HEK293 (cell line): ENCODE measurements at regions of chr7 and their contacts with region 1.

Region 1: DNA sequence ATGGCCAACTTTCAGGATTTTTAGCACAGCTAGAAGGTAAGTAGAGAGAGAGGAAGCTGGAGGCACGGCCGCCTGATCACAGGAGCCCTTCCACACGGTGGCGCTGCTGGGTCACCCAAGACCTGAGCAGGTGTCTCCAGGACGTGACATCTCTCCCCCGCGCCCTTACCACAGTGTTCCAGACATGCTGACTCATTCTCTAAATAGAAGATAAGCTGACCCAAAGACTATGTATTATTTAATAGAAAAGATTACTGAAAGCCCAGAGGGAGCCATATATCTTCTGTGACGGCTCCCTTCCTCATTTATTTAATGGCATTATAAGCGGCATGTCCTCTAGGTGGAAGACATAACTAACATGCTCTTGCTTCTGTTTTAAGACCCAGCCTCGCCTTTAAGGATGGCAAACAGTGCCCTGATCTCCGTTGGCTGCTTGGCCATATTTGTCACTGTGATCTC is 26.0 kb upstream of the MALSU1 start:
- H3K4me3 ChIP-seq: no peak overlapping the region; the same call in 1 of the 2 replicates
- H3K27ac ChIP-seq: peak overlapping the region; percentile 58
- H3K4me1 ChIP-seq: peaks cover 12% of the 10 kb centered on the region; the same call in 1 of the 2 replicates
- CTCF ChIP-seq: peak; percentile 76

Region 2: DNA sequence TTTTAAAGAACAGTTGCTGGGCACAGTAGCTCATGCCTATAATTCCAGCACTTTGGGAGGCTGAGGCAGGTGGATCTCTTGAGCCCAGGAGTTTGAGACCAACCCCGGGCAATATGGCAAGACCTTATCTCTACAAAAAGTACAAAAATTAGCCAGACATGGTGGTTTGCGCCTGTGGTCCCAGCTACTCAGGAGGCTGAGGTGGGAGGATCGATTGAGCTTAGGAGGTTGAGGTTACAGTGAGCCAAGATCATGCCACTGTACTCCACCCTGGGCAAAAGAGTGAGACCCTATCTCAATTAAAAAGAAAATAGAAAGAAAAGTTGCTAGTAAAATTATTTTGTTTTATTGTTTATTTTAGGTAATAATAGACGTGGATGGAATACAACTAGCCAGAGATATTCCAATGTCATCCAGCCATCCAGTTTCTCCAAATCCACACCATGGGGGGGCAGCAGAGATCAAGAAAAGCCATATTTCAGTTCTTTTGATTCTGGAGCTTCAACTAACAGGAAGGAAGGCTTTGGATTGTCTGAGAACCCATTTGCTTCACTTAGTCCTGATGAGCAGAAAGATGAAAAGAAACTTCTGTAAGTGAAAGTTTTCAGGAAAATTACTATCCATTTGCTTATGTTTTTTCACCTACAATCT is 88.3 kb before region 1 on chr7:
- CTCF ChIA-PET with region 1: interaction called, 15 read pairs
- POLR2A ChIA-PET with region 1: interaction called, 3 read pairs
- H3K4me3 ChIP-seq: no peak overlapping the region
- H3K27ac ChIP-seq: no peak overlapping the region
- H3K4me1 ChIP-seq: peaks cover 5% of the 10 kb centered on the region
- CTCF ChIP-seq: 0 out of 2 replicates have a peak, but pooled peaks have one; percentile 24

Region 3: DNA sequence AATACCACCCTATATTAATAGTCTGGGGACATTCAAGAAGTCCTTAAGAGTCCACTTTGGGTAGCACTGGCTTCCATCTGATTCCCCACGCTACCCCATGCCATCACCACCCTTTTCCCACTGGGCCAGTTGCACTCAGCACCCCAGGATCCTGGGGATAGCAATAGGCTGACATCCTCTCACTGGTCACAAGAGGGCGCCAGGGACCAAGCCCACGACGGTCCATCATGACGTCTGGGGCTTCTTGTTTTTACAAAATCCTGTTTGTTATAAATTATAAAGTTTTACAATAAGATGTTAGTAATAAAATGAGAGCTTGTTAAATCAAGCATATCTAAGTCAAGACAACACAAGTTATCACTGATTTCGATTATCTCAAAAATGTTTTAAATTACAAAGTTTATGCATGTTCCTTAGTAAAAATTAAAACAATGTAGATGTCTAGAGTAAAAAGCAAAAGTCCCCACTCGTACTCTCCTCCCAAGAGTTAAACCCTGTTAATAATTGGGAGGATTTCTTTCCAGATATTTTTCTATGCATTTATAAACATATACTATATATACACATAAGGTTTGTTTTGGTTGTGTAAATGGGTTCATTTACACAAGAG is 11.2 kb before region 1 on chr7:
- CTCF ChIA-PET with region 1: interaction called, 92 read pairs
- POLR2A ChIA-PET with region 1: no interaction called
- H3K4me3 ChIP-seq: no peak overlapping the region
- H3K27ac ChIP-seq: no peak overlapping the region
- H3K4me1 ChIP-seq: no peaks in the 10 kb centered on the region
- CTCF ChIP-seq: 0 out of 2 replicates have a peak, but pooled peaks have one; percentile 29

Region 4: GRCh38 chr7:23284871-23285270 is 11.7 kb after region 1 on chr7:
- CTCF ChIA-PET with region 1: interaction called, 12 read pairs
- POLR2A ChIA-PET with region 1: no interaction called
- H3K4me3 ChIP-seq: no peak overlapping the region
- H3K27ac ChIP-seq: no peak overlapping the region
- H3K4me1 ChIP-seq: no peaks in the 10 kb centered on the region
- CTCF ChIP-seq: no peak

Region 5: DNA sequence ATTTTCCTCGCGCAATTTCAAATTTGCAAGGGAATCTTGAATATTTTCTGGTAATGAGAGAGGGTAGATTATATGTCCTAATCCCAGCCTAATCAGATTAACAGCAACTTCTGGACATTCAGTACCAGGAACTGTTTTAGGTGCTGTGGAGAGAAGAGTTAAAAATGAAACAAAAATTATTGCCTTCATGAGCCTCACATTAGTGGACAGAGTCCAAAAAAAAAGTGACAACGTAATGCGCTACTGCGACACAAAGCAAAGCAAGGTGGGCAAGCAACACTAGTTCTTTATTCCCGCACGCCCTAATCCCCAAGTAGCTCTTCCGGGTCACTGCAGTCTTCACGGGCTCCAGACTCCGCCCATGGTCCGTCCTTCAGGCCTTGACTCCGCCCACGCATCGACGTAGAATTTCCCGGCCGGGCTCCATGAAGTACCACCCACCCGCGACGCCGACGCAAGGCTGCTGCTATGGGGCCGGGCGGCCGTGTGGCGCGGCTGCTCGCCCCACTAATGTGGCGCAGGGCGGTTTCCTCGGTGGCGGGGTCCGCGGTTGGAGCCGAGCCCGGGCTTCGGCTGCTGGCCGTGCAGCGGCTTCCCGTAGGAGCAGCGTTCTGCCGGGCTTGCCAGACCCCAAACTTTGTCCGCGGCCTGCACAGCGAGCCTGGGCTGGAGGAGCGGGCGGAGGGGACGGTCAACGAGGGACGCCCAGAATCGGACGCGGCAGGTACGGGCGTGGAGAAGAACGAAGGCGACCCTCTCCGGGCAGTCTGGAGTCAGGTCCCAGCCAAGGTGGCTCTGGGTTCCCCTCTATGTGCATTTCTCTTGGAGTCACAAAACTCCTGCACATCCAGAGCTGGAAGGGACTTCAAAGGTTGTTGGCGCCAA is 26.0 kb after region 1 on chr7 and contains the start of gene MALSU1:
- CTCF ChIA-PET with region 1: interaction called, 9 read pairs
- POLR2A ChIA-PET with region 1: interaction called, 15 read pairs
- H3K4me3 ChIP-seq: peak within 1 kb of the TSS; percentile 86
- H3K27ac ChIP-seq: peak within 1 kb of the TSS; percentile 60
- H3K4me1 ChIP-seq: peaks cover 2% of the 10 kb centered on the region; the same call in 1 of the 2 replicates
- CTCF ChIP-seq: 0 out of 2 replicates have a peak, but pooled peaks have one; percentile 16

Region 6: DNA sequence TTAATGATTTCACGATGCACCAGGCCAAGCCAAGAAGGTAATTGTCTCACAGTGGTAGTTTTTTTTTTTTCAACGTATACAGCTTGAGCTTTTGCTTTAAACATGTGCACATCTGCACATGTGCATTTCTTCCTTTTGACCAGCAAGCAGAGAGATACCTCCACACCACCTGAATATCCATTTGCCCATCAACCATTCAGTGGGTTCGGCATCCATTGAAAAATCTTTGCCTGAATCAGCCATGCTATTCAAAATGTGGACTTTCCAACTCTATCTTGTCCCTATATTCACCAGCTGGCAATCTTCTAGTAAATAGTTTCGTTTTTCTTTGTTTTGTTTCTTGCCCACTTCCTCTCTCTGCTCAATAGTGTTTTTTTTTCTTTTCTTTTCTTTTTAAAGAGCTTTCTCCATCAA is 266.3 kb after region 1 on chr7:
- CTCF ChIA-PET with region 1: interaction called, 11 read pairs
- POLR2A ChIA-PET with region 1: no interaction called
- H3K4me3 ChIP-seq: no peak overlapping the region
- H3K27ac ChIP-seq: no peak overlapping the region
- H3K4me1 ChIP-seq: no peaks in the 10 kb centered on the region
- CTCF ChIP-seq: no peak

Region 7: GRCh38 chr7:23712368-23713284 is 439.5 kb after region 1 on chr7:
- CTCF ChIA-PET with region 1: interaction called, 13 read pairs
- POLR2A ChIA-PET with region 1: no interaction called
- H3K4me3 ChIP-seq: no peak overlapping the region
- H3K27ac ChIP-seq: no peak overlapping the region
- H3K4me1 ChIP-seq: no peaks in the 10 kb centered on the region
- CTCF ChIP-seq: 0 out of 2 replicates have a peak, but pooled peaks have one; percentile 12